ENCODE measurements at regions of chr4 and their contacts with region 1.

Region 1: DNA sequence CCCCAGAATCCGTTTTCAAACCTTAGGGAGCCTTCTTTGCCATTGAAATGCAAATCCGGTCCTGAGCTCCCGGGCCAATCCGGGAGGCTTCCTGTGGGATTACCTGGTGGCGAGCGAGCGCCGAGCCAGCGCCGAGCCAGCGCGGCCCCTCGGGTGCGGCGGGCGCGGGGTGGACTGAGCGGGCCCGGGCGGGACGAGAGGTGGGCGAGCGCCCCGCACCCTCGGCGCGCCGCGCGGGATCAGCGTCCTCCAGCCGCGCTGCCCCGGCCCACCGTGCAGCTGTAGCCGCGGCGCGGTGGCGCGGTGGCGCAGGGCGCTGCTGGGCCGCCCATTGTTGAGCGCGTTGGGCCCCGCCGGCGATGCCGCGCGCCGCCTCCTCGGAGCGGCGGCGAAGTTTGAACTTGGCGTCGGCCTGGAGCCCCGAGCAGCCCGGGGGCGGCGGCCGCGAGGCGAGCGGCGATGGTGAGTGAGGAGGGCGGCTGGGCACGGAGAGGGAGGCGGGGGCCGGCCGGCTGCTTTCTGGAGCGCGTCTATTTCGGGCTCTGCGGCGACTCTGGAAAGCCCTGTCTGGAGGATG is 208.6 kb downstream of the SOWAHB start:
- DNase-seq: peak; percentile 28
- ATAC-seq: peak; percentile 92
- H3K4me3 ChIP-seq: peak overlapping the region; percentile 97
- H3K27ac ChIP-seq: peak overlapping the region; percentile 99
- H3K4me1 ChIP-seq: peaks cover 12% of the 10 kb centered on the region
- H3K27me3 ChIP-seq: no peaks in the 10 kb centered on the region
- CTCF ChIP-seq: peak; percentile 3; the same call in 1 of the 2 replicates
- POLR2A ChIP-seq: peak; percentile 30; the same call in 1 of the 2 replicates
- RAD21 ChIP-seq: peak; percentile 26; the same call in 1 of the 2 replicates

Region 2: DNA sequence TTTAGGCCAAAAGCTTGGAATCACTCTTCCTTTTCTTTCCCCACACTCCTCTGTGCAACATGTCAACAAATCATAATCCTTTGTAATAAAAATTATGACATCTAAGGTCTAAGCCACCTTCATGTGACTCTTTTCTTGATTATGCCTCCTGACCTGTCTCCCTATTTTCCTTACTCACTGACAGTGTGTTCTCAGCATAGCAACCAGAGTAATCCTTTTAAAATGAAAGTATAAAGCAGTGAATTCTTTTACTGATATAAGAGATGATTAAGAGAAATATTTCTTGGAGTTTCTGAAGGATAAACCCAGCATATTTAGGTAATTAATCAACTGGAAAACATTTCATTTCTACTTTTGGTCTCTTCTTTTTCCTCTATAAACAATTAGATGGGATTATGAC is 920.3 kb before region 1 on chr4:
- CTCF ChIA-PET with region 1: no interaction called
- POLR2A ChIA-PET with region 1: no interaction called
- dilution Hi-C with region 1: no loop called
- in situ Hi-C with region 1: no loop called
- intact Hi-C with region 1: no loop called
- DNase-seq: peak; percentile 33
- ATAC-seq: peak; percentile 75
- H3K4me3 ChIP-seq: no peak overlapping the region
- H3K27ac ChIP-seq: no peak overlapping the region
- H3K4me1 ChIP-seq: peaks cover 3% of the 10 kb centered on the region; the same call in 1 of the 2 replicates
- H3K27me3 ChIP-seq: no peaks in the 10 kb centered on the region
- CTCF ChIP-seq: no peak
- POLR2A ChIP-seq: no peak
- RAD21 ChIP-seq: no peak

Region 3: DNA sequence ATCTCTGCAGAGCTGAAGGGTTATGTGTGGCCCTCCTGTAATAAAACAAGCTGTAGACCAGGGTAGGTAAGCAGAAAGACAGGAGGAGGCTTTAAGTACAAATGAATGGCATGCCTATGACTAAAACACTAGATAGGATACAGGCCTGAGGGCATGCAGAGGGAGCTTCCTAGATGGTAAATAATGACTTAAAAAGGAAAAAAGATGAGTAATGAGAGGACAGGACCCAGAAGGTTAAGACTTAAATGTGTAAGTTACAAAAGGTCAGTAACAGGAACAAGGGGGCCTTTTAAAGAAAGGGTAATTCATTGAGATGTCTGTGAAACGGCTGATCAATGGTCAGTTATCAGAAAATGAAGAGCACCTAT is 13.8 kb after region 1 on chr4:
- CTCF ChIA-PET with region 1: interaction called, 6 read pairs
- POLR2A ChIA-PET with region 1: interaction called, 10 read pairs
- dilution Hi-C with region 1: no loop called
- in situ Hi-C with region 1: no loop called
- intact Hi-C with region 1: no loop called
- DNase-seq: no peak
- ATAC-seq: peak; percentile 27; the same call in 1 of the 2 replicates
- H3K4me3 ChIP-seq: no peak overlapping the region
- H3K27ac ChIP-seq: peak overlapping the region; percentile 43; the same call in 1 of the 2 replicates
- H3K4me1 ChIP-seq: peaks cover 36% of the 10 kb centered on the region
- H3K27me3 ChIP-seq: no peaks in the 10 kb centered on the region
- CTCF ChIP-seq: no peak
- POLR2A ChIP-seq: no peak
- RAD21 ChIP-seq: no peak

Region 4: GRCh38 chr4:76738086-76738931 is 49.0 kb after region 1 on chr4:
- CTCF ChIA-PET with region 1: no interaction called
- POLR2A ChIA-PET with region 1: no interaction called
- dilution Hi-C with region 1: no loop called
- in situ Hi-C with region 1: no loop called
- intact Hi-C with region 1: loop called (anchors 5 kb)
- DNase-seq: peak; percentile 92
- ATAC-seq: peak; percentile 77
- H3K4me3 ChIP-seq: no peak overlapping the region
- H3K27ac ChIP-seq: peak overlapping the region; percentile 87
- H3K4me1 ChIP-seq: peaks cover 36% of the 10 kb centered on the region
- H3K27me3 ChIP-seq: no peaks in the 10 kb centered on the region
- CTCF ChIP-seq: no peak
- POLR2A ChIP-seq: peak; percentile 30; the same call in 1 of the 2 replicates
- RAD21 ChIP-seq: no peak

Region 5: DNA sequence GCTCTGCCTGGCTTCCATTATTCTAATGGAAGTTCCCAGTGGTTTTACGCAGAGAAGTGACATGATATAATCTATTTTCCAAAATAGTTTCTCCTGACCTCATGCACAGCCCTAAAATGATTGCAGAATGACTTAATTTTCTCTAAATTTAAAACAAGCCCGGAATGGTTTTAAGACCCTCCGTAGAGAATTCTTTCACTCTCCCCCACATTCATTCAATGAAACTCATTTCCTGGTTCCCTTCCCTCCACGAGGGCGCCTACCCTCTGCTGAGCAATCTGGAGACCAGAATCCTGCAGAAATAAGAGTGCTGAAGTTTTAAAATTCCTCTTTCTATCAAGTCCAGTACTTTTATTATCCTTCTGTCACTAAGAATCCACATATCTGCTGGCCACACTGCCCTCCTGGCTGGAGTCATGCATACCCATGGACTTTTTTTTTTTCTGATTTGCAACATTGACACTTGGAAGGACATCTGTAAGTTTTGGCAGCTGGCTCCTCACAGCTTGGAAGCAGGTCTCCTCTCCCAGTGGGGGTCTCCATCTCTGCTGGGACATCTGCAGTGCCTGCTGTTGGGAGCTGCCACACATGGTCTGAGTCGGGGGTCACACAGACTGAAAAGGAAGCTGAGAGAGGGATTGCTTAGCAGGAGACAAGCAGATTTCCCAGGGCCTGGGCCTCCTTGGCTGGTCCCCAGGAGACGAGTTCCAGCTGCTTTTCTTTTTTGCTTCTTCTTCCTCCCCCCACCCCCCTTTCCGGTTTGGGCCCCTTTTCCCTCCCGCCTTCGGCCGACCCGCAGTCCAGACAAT is 122.5 kb after region 1 on chr4:
- CTCF ChIA-PET with region 1: no interaction called
- POLR2A ChIA-PET with region 1: no interaction called
- dilution Hi-C with region 1: no loop called
- in situ Hi-C with region 1: no loop called
- intact Hi-C with region 1: no loop called
- DNase-seq: peak; percentile 69
- ATAC-seq: peak; percentile 68
- H3K4me3 ChIP-seq: no peak overlapping the region
- H3K27ac ChIP-seq: peak overlapping the region; percentile 31
- H3K4me1 ChIP-seq: peaks cover 8% of the 10 kb centered on the region
- H3K27me3 ChIP-seq: no peaks in the 10 kb centered on the region
- CTCF ChIP-seq: no peak
- POLR2A ChIP-seq: no peak
- RAD21 ChIP-seq: no peak

Region 6: DNA sequence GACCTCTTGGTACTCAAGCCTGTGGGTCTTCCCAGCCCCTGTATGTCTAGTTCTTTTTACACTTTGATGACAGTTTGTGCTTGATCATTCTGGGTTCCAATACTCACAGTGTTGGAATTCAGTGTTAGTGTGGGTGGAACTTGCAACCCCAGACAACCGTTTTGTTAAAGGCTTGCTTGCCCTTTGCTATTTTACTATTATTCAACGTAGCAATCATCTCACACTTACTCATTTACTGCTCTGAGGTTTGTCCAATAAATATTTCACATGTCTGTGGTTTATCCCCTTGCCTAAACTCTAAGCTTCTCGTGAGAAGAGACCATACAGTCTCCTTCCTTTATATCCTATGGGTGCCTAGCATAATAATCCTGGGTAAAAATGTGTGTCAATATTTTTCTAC is 483.0 kb after region 1 on chr4:
- CTCF ChIA-PET with region 1: no interaction called
- POLR2A ChIA-PET with region 1: no interaction called
- dilution Hi-C with region 1: no loop called
- in situ Hi-C with region 1: no loop called
- intact Hi-C with region 1: no loop called
- DNase-seq: peak; percentile 95
- ATAC-seq: peak; percentile 90
- H3K4me3 ChIP-seq: no peak overlapping the region
- H3K27ac ChIP-seq: no peak overlapping the region
- H3K4me1 ChIP-seq: peaks cover 10% of the 10 kb centered on the region
- H3K27me3 ChIP-seq: peaks cover 33% of the 10 kb centered on the region
- CTCF ChIP-seq: no peak
- POLR2A ChIP-seq: no peak
- RAD21 ChIP-seq: no peak

Region 7: GRCh38 chr4:77804471-77804870 is 1115.1 kb after region 1 on chr4:
- CTCF ChIA-PET with region 1: no interaction called
- POLR2A ChIA-PET with region 1: no interaction called
- dilution Hi-C with region 1: no loop called
- in situ Hi-C with region 1: no loop called
- intact Hi-C with region 1: no loop called
- DNase-seq: peak; percentile 31
- ATAC-seq: peak; percentile 46
- H3K4me3 ChIP-seq: no peak overlapping the region
- H3K27ac ChIP-seq: no peak overlapping the region
- H3K4me1 ChIP-seq: peaks cover 4% of the 10 kb centered on the region; the same call in 1 of the 2 replicates
- H3K27me3 ChIP-seq: no peaks in the 10 kb centered on the region
- CTCF ChIP-seq: no peak
- POLR2A ChIP-seq: no peak
- RAD21 ChIP-seq: no peak